ENCODE measurements at regions of chr19 and their contacts with region 1.

Region 1: GRCh38 chr19:50461066-50461875 is 15.0 kb upstream of the EMC10 start:
- DNase-seq: peak; percentile 88
- ATAC-seq: peak; percentile 87
- H3K4me3 ChIP-seq: peak overlapping the region; percentile 47
- H3K27ac ChIP-seq: no peak overlapping the region
- H3K4me1 ChIP-seq: 0 out of 2 replicates have a peak, but pooled peaks cover 6% of the 10 kb centered on the region
- H3K27me3 ChIP-seq: peaks cover 7% of the 10 kb centered on the region; the same call in 1 of the 2 replicates
- CTCF ChIP-seq: peak; percentile 91

Region 2: GRCh38 chr19:50036908-50037307 is 424.4 kb before region 1 on chr19:
- CTCF ChIA-PET with region 1: no interaction called
- POLR2A ChIA-PET with region 1: no interaction called
- intact Hi-C with region 1: no loop called
- DNase-seq: peak; percentile 22
- ATAC-seq: no peak
- H3K4me3 ChIP-seq: no peak overlapping the region
- H3K27ac ChIP-seq: no peak overlapping the region
- H3K4me1 ChIP-seq: no peaks in the 10 kb centered on the region
- H3K27me3 ChIP-seq: no peaks in the 10 kb centered on the region
- CTCF ChIP-seq: no peak

Region 3: DNA sequence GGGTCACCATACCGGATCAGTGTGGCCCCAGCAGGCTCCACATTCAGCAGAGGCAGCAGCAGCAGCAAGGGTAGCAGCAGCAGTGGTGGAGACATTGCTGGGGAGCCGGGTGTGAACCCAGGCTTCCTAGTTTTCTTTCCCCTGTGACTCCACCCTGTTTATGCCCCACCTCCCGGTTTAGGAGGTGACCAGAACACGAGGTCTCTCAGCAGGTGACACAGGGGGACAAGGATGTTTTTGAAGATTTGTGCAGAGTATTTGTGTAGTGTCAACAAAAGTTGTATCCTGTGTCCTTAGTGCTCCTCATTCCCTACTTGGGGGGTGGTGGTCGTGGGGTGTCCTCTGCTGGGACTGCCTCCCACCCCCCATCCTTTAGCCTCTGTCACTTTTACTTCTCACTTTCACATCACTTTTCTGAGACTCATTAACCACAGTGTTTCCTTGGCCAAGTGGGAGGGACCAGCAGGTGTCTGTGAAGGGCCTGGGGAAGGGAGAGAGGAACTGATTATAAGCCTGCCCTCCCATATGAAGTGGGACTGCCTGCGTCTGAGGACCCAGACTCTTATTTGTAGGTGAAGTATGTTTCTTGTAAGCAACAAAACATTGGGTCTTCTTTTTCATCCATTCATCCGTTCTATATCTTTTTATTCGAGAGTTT is 116.5 kb before region 1 on chr19:
- CTCF ChIA-PET with region 1: no interaction called
- POLR2A ChIA-PET with region 1: no interaction called
- intact Hi-C with region 1: no loop called
- DNase-seq: no peak
- ATAC-seq: no peak
- H3K4me3 ChIP-seq: no peak overlapping the region
- H3K27ac ChIP-seq: no peak overlapping the region
- H3K4me1 ChIP-seq: no peaks in the 10 kb centered on the region
- H3K27me3 ChIP-seq: no peaks in the 10 kb centered on the region
- CTCF ChIP-seq: no peak

Region 4: DNA sequence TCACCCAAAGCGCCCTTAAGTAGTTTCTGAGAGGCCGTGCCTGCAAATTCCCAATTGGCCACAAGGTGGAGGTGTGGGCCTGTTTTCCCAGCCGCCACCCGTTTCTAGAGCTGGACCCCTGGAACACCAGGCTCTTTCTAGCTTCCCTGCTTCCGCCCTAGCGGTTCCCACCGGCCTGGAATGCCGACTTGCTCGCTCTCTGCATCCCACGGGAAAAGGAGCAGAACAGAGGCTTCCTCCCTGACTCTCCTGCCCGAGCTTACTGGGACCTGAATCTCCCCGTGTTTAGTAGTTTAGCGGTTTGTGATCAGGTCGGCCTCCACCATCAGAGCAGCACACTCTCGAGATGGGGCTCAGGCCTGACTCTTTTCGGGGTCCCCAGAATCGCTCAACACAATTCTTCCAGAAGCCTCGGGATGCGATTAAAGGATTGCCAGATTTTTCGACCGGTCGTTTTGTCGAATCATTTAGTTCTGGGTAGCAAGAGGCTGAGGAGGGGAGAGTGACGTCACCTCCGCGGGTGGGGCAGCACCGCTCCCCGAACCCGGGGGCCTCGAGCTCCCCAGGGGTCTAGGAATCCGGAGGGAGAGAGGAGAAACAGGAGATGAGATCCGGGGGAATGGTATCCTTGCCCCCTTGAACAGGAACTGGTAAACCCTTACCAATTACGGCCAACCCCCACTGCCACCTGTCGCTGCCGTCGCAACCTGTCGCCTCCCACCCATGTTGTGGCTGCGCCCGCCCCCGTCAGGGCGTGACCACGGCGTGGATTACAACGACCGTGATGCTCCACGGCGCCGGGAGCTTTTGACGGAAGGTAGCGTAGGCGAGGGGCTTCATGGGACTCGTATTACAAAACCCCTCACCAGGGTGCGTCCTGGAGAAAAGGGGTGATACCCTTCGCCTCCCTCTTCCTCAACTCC is 103.8 kb before region 1 on chr19:
- CTCF ChIA-PET with region 1: interaction called, 4 read pairs
- POLR2A ChIA-PET with region 1: no interaction called
- intact Hi-C with region 1: loop called (anchors 1 kb)
- DNase-seq: peak; percentile 82
- ATAC-seq: peak; percentile 84
- H3K4me3 ChIP-seq: peak overlapping the region; percentile 60
- H3K27ac ChIP-seq: no peak overlapping the region
- H3K4me1 ChIP-seq: no peaks in the 10 kb centered on the region; the same call in 1 of the 2 replicates
- H3K27me3 ChIP-seq: no peaks in the 10 kb centered on the region
- CTCF ChIP-seq: peak; percentile 89

Region 5: DNA sequence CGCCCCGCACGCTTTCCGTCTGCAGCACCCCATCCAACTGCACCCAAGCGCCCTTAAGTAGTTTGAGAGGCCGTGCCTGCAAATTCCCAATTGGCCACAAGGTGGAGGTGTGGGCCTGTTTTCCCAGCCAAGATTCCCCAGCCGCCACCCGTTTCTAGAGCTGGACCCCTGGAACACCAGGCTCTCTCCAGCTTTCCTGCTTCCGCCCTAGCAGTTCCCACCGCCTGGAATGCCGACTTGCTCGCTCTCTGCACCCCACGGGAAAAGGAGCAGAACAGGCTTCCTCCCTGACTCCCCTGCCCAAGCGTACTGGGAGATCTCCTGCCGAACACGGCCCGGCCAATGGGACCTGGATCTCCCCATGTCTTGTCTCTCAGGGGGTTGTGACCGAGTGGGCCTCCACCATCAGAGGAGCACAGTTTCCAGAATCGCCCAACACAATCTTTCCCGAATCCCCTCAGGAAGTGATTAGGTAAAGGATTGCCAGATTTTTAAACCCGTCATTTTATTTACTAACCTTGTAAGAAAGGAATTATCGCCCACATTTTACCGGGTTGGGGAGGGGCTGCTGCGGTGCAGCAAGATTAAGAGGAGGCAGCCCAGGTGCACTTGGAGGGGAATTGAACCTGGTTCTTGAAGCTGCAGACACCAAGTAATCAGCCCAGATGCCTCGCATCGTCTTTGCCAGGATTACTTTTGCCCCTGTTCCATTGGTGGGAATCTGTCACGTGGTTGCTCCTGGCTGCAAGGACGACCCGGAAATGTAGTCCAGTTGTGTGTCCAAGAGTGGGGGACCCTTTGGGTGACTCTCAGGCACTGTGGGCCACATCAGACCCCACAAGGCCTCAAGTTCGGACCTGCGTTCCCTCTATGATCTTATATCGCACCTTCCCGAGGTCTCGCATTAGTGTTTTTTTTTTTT is 92.4 kb before region 1 on chr19:
- CTCF ChIA-PET with region 1: interaction called, 9 read pairs
- POLR2A ChIA-PET with region 1: no interaction called
- intact Hi-C with region 1: loop called (anchors 1 kb)
- DNase-seq: peak; percentile 93
- ATAC-seq: peak; percentile 95
- H3K4me3 ChIP-seq: peak overlapping the region; percentile 86
- H3K27ac ChIP-seq: 0 out of 2 replicates have a peak overlapping the region, but pooled peaks have one; percentile 1
- H3K4me1 ChIP-seq: peaks cover 4% of the 10 kb centered on the region; the same call in 1 of the 2 replicates
- H3K27me3 ChIP-seq: no peaks in the 10 kb centered on the region
- CTCF ChIP-seq: peak; percentile 91

Region 6: DNA sequence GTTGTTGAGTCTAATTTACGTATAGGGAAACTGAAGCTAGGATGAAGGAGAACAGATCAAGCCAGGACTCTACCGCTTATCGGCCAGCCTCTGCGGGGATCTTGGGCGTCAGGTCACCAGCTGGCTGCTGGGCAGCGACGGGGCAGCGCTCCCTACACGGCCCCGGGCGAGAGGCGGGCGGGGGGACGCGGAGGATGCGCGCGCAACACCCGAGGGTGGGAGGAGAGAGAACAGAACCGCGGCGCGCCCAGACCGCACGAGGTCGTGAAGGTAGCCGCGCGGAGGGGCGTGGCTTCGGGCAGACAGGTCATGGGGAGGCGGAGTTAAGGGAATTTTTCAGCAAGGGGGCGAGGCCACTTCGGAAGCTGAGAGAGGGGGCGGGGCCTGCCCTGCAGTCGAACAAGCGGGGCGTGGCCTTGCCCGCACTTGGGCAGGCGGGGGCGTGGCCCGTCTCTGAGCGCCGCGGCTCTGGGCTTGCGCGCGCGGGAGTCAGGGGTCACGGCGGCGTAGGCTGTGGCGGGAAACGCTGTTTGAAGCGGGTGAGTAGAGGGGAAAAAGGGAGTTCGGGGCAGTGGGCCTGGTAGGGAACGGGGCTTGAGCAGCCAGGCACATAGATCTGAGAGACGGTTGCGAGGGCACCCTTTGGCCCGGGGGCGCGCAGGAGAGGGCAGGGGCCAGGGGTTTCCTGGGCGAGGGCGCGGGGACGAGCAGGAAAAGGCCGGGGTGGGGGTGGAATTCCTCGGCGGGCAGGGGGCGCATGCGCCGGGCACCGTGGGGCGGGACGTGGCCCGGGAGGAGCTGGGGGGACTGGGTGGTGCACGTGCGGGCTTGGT is 77.2 kb before region 1 on chr19 and contains the start of gene POLD1:
- CTCF ChIA-PET with region 1: no interaction called
- POLR2A ChIA-PET with region 1: no interaction called
- intact Hi-C with region 1: loop called (anchors 1 kb)
- DNase-seq: peak; percentile 99
- ATAC-seq: peak; percentile 84
- H3K4me3 ChIP-seq: peak within 1 kb of the TSS; percentile 78
- H3K27ac ChIP-seq: peak within 1 kb of the TSS; percentile 49
- H3K4me1 ChIP-seq: peaks cover 15% of the 10 kb centered on the region; the same call in 1 of the 2 replicates
- H3K27me3 ChIP-seq: no peaks in the 10 kb centered on the region
- CTCF ChIP-seq: no peak
- total RNA-seq, gene POLD1: 165 and 210 TPM in 2 replicates

Region 7: GRCh38 chr19:50478901-50479736 is 17.8 kb after region 1 on chr19:
- CTCF ChIA-PET with region 1: no interaction called
- POLR2A ChIA-PET with region 1: no interaction called
- intact Hi-C with region 1: no loop called
- DNase-seq: peak; percentile 38
- ATAC-seq: no peak
- H3K4me3 ChIP-seq: no peak overlapping the region
- H3K27ac ChIP-seq: no peak overlapping the region
- H3K4me1 ChIP-seq: peaks cover 8% of the 10 kb centered on the region
- H3K27me3 ChIP-seq: no peaks in the 10 kb centered on the region
- CTCF ChIP-seq: peak; percentile 80

Region 8: GRCh38 chr19:50679177-50680125 is 218.2 kb after region 1 on chr19:
- CTCF ChIA-PET with region 1: no interaction called
- POLR2A ChIA-PET with region 1: no interaction called
- intact Hi-C with region 1: no loop called
- DNase-seq: peak; percentile 88
- ATAC-seq: peak; percentile 96
- H3K4me3 ChIP-seq: no peak overlapping the region
- H3K27ac ChIP-seq: no peak overlapping the region
- H3K4me1 ChIP-seq: no peaks in the 10 kb centered on the region
- H3K27me3 ChIP-seq: peaks cover 30% of the 10 kb centered on the region
- CTCF ChIP-seq: no peak